ENCODE measurements at regions of chr17 and their contacts with region 1.

Region 1: GRCh38 chr17:34199932-34200534 is 55.1 kb upstream of the CCL2 start:
- DNase-seq: peak; percentile 78 to 91
- H3K4me3 ChIP-seq: no peak overlapping the region
- H3K27ac ChIP-seq: no peak overlapping the region
- H3K4me1 ChIP-seq: peaks cover 0 to 13% (median 8%) of the 10 kb centered on the region in 4 donors
- H3K27me3 ChIP-seq: peaks cover 0 to 32% (median 0%) of the 10 kb centered on the region in 3 donors
- CTCF ChIP-seq: peak in 6 of 7 experiments; percentile 12 to 100 (median 98)
- EP300 ChIP-seq: no peak
- POLR2A ChIP-seq: no peak

Region 2: DNA sequence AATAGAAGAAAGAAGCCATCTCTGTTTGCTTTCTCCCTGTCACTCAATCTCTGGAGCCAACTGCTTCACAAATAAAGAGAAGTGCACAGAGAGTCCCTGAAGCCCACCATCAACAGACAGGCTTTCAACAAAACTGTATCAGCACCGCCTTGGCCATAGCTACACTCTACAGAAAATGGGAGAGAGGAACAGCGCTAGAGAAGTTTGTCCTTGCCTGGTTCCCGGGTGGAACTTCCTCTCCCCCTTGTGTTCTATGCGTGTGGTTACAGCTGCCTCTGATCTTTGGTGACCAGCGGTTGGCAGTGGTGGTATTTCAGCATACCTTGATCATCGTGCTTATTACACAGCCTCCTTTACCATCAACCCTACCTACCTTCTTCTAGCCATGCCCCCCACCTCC is 36.4 kb before region 1 on chr17:
- intact Hi-C with region 1: no loop called
- DNase-seq: peak in 1 of 2 donors; percentile 61
- H3K4me3 ChIP-seq: no peak overlapping the region
- H3K27ac ChIP-seq: peak overlapping the region in 1 of 5 donors; percentile 64
- H3K4me1 ChIP-seq: peaks cover 0 to 15% (median 10%) of the 10 kb centered on the region in 4 donors
- H3K27me3 ChIP-seq: peaks cover 0 to 69% (median 7%) of the 10 kb centered on the region in 3 donors
- CTCF ChIP-seq: peak in 4 of 7 experiments; percentile 10 to 23 (median 16)
- EP300 ChIP-seq: no peak
- POLR2A ChIP-seq: no peak

Region 3: GRCh38 chr17:34254651-34255380 is 54.8 kb after region 1 on chr17 and contains the start of gene CCL2:
- intact Hi-C with region 1: no loop called
- DNase-seq: peak; percentile 33 to 92
- H3K4me3 ChIP-seq: peak within 1 kb of the TSS; percentile 32 to 42 (median 40)
- H3K27ac ChIP-seq: peak within 1 kb of the TSS; percentile 72 to 87 (median 84)
- H3K4me1 ChIP-seq: peaks cover 19 to 63% (median 53%) of the 10 kb centered on the region in 4 donors
- H3K27me3 ChIP-seq: peaks cover 0 to 3% (median 0%) of the 10 kb centered on the region in 3 donors
- CTCF ChIP-seq: no peak
- EP300 ChIP-seq: no peak
- POLR2A ChIP-seq: no peak
- total RNA-seq, gene CCL2: 3.8 to 29.9 (median 11.1) TPM

Region 4: DNA sequence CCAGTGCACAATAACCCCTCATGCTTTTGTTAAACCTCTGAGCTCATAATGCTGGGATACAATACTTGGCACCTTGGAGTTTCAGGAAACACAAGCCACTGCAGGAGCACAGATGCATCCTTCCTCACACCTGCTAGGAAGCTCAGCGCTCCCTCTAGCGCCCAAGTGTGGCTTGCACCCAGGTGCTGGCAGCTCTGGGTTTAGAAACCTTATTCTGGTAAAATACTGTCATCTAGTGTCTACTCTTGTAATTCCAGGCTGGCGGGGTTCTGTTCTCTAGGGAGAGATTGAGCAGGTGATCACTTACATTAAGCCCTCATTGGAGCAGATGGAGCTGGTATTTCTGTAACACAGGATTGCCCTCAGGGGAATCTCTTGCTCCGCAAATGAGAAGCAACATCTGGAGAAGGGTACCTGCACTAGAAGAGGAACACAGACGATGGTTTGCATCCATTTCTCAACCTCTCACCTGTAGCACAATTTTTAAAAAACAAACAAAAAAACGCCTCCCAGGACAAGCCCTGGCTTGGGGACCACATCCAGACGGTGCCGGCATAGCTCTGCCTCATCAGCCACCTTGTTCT is 161.5 kb after region 1 on chr17:
- intact Hi-C with region 1: loop called (anchors 5 kb)
- DNase-seq: peak; percentile 83 to 95
- H3K4me3 ChIP-seq: no peak overlapping the region
- H3K27ac ChIP-seq: no peak overlapping the region
- H3K4me1 ChIP-seq: no peaks in the 10 kb centered on the region
- H3K27me3 ChIP-seq: peaks cover 0 to 43% (median 0%) of the 10 kb centered on the region in 3 donors
- CTCF ChIP-seq: peak in 5 of 7 experiments; percentile 89 to 99 (median 94)
- EP300 ChIP-seq: no peak
- POLR2A ChIP-seq: no peak

Region 5: GRCh38 chr17:34378664-34379101 is 178.7 kb after region 1 on chr17:
- intact Hi-C with region 1: no loop called
- DNase-seq: peak in 1 of 2 donors; percentile 28
- H3K4me3 ChIP-seq: peak overlapping the region in 1 of 4 donors; percentile 9
- H3K27ac ChIP-seq: peak overlapping the region in 1 of 5 donors; percentile 16
- H3K4me1 ChIP-seq: peaks cover 0 to 11% (median 0%) of the 10 kb centered on the region in 4 donors
- H3K27me3 ChIP-seq: peaks cover 0 to 18% (median 0%) of the 10 kb centered on the region in 3 donors
- CTCF ChIP-seq: no peak
- EP300 ChIP-seq: no peak
- POLR2A ChIP-seq: no peak

Measured in stomach (tissue), 19 donors.